CD4-positive, alpha-beta memory T cell (primary cell): ENCODE measurements at regions of chr15 and their contacts with region 1.

Region 1: GRCh38 chr15:75903331-75904239 is at the start of gene FBXO22:
- DNase-seq: peak; percentile 86 to 89 (median 87)
- H3K4me3 ChIP-seq: peak within 1 kb of the TSS; percentile 80 to 96
- H3K4me3 Mint-ChIP-seq: peak within 1 kb of the TSS; percentile 96 to 99 (median 98)
- H3K27ac ChIP-seq: peak within 1 kb of the TSS; percentile 70
- H3K27ac Mint-ChIP-seq: peak within 1 kb of the TSS; percentile 93 to 98 (median 96)
- H3K4me1 ChIP-seq: peaks cover 31% of the 10 kb centered on the region
- H3K4me1 Mint-ChIP-seq: peaks cover 19 to 55% (median 39%) of the 10 kb centered on the region in 4 donors
- H3K27me3 ChIP-seq: no peaks in the 10 kb centered on the region
- H3K27me3 Mint-ChIP-seq: no peaks in the 10 kb centered on the region
- total RNA-seq, gene FBXO22: 29.7 to 30.1 TPM

Region 2: DNA sequence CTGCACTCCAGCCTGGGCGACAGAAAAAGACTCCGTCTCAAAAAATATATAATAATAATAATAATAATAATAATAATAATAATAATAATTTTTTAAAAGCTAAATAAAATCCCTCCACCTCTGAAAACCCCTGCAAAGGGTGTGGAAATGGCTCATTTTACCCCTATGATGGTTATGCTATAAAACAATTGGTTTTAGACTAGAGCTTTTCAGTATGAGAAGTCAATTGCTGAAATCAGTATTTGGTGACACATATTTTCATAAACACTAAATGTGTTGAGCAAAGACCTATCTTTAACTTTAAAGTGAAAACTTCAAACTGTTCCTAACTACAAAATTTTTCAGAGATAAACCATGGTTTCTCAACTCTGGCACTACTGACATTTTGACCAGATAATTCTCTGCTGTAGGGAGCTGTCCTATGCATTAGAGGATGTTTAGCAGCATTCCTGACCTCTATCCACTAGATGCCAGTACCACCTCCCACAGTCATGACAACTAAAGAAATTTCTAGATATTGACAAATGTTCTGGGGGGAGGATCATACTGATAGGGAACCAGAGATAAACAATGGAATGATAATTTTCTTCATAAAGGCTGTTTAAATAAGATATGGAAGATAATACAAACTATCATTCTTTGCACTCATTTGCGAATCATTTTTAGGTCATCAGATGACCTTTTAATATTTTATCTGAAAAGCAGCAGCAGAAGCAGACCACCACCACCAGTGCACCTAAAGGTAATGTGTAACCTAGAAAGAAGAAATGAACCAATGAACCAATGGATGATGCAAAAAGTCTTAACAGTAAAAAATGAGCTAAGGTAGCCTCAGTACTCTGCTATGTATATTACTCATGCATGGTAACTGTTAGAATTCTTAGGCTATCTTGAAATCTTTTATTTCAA is 338.3 kb before region 1 on chr15:
- CTCF ChIA-PET with region 1: no interaction called
- POLR2A ChIA-PET with region 1: no interaction called
- intact Hi-C with region 1: no loop called
- DNase-seq: no peak
- H3K4me3 ChIP-seq: no peak overlapping the region
- H3K4me3 Mint-ChIP-seq: no peak overlapping the region
- H3K27ac ChIP-seq: no peak overlapping the region
- H3K27ac Mint-ChIP-seq: peak overlapping the region in 2 of 7 donors; percentile 29 to 53
- H3K4me1 ChIP-seq: peaks cover 3% of the 10 kb centered on the region
- H3K4me1 Mint-ChIP-seq: peaks cover 12 to 26% (median 16%) of the 10 kb centered on the region in 4 donors
- H3K27me3 ChIP-seq: no peaks in the 10 kb centered on the region
- H3K27me3 Mint-ChIP-seq: no peaks in the 10 kb centered on the region

Region 3: DNA sequence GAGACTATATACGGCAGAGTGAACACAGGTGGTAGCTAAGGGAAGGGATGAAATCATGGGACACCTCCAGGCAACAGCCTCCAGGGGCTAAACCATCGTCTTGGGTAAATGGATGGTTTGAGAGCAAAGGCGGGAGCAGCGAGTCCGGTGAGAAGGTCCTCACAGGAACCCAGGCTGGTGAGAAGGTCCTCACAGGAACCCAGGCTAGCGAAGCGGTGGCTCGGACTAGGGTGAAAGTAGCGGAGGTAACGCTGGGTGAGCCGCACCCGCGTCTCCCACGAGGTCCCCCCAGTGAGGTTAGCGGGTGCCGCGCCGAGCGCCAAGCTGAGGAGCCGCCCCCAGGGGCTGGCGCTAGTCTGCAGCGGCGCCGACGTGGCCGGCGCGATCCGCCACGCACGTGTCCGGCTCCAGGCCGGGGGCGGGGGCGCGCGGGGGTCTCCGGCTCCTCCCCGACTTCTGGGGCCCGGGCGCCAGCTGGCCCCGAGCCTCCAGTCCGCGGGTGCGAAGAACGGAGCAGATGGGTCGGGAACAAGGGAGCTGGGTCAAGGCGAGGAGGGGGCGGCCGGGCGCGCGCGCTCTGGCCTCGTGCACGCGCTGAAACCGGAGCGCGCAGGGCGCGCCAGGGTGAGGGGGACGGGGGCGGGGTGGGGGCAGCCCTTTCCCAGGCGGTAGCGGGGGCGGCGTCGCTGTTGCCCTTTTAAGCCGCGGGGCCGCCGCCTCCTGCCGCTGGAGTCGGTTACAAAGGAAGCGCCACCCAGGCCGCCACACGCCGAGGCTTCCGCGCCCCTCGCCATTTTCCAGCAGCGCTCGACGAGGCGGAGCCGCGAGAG is 60.6 kb before region 1 on chr15 and contains the start of gene UBE2Q2:
- CTCF ChIA-PET with region 1: no interaction called
- POLR2A ChIA-PET with region 1: interaction called, 30 read pairs
- intact Hi-C with region 1: loop called (anchors 1 kb)
- DNase-seq: peak; percentile 69 to 78 (median 71)
- H3K4me3 ChIP-seq: peak within 1 kb of the TSS; percentile 57 to 71
- H3K4me3 Mint-ChIP-seq: peak within 1 kb of the TSS; percentile 92 to 99 (median 96)
- H3K27ac ChIP-seq: peak within 1 kb of the TSS; percentile 67
- H3K27ac Mint-ChIP-seq: peak within 1 kb of the TSS; percentile 91 to 98 (median 96)
- H3K4me1 ChIP-seq: peaks cover 40% of the 10 kb centered on the region
- H3K4me1 Mint-ChIP-seq: peaks cover 32 to 53% (median 47%) of the 10 kb centered on the region in 4 donors
- H3K27me3 ChIP-seq: no peaks in the 10 kb centered on the region
- H3K27me3 Mint-ChIP-seq: no peaks in the 10 kb centered on the region
- total RNA-seq, gene UBE2Q2: 38.0 to 42.9 TPM